HEK293T (cell line): ENCODE measurements at regions of chr6 and their contacts with region 1.

Region 1: DNA sequence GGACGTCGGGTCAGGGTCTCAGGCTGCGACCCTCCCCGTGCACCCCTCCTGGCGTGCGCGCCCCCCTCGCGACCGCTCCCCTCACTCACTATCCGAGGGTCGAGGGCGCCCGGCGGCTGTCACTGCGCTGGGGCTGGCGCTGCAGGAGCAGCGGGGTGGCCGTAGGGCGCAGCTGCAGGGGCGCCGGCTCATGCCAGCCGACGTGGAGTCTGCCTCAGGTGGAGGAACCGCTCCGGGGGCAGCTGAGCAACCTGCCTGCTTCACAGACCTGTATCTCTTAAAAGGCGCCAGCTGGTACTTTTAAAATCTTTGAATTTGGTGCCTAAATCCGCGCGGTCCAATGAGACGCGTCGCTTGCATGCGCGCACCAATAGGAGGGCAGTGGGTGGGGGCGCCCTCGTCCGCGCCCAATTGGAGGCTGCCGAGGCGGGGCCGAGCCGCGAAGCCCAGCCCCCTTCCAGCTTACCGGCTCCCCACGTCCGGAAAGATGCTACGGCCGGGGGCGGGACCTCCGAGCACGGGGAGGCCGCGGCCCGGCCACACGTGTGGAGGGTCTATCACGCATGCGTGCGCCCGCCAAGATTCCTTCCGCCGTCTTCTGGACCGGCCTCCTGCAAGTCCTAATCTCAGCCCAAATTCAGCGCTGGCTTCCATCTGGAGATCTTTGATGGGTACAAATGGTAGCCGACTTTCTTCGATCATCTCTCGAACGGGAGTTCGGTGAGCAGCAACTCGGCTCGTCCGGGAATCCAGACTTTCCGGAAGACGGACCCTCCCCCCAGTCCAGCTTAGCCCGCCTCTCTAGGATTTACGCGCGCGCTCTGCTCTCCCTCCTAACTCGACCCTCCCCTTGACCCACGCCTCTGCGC is at the start of gene FBXO5:
- DNase-seq: peak; percentile 92

Region 2: DNA sequence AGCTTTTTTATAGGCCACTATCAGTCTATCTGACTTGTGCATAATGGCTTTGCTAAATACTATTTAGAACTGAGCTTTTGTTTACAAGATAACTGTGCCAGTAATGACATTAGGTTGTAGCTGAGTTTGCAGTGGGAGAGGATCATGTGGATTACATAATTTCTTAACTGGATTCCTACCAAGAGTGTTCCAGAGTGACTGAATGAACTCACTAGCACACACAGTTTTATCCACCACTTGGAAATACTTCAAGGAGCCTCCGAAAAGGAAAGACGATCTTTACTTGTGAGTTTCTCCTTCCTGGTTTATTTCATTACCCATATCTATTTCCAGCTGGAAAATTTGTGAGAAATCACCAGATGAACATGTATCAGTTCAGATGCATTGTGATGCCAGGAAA is 334.9 kb before region 1 on chr6:
- CTCF ChIA-PET with region 1: no interaction called
- POLR2A ChIA-PET with region 1: no interaction called
- DNase-seq: no peak

Region 3: GRCh38 chr6:153002607-153003365 is 19.8 kb after region 1 on chr6 and contains the start of gene MTRF1L:
- CTCF ChIA-PET with region 1: no interaction called
- POLR2A ChIA-PET with region 1: interaction called, 48 read pairs
- DNase-seq: peak; percentile 92

Region 4: GRCh38 chr6:153044295-153044694 is 61.3 kb after region 1 on chr6:
- CTCF ChIA-PET with region 1: no interaction called
- POLR2A ChIA-PET with region 1: no interaction called
- DNase-seq: no peak